Thyroid gland (tissue), 4 donors: ENCODE measurements at regions of chr16 and their contacts with region 1.

Region 1: DNA sequence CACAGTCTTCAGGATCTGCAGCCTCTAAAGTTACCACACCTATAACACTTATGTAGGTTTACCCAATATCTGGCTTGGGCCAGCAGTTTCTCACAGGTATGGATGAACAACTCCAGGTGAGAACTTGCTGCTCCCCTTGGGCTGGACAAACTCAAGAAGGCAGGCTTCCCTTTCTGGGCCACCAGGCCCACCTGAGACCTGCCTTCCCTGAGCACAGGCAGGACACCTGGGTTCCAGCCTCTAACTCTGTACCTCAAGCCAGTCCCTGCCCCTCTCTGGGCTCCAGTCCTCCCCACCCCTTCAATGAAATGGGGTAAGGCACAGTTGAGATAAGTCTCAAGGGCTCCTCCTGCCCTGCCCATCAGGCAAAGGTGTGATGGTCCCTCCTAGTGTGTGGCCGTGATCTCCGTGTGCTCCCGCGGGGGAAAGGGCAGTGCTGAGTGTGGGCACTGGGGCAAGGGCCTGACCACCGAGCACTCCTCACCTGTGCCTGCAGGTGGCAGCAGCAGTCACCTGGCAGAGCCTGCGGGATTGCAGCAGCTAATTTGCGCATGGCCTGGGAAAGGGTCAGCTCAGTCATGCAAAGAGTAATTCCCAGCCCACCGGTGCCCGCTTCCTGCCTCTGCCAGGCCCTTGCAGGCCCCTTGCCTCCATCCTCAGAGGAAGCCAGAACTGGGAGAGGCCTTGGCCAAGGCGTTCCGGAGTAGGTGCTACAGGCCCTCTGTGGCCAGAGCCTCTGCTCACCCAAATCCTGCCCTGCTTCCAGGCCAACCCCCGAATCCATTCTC is 28.2 kb upstream of the ADGRG1 start:
- DNase-seq: peak; percentile 76 to 82
- H3K4me3 ChIP-seq: no peak overlapping the region
- H3K27ac ChIP-seq: peak overlapping the region in 2 of 3 donors; percentile 4 to 26
- H3K4me1 ChIP-seq: peaks cover 10 to 18% of the 10 kb centered on the region in 2 donors
- H3K27me3 ChIP-seq: no peaks in the 10 kb centered on the region
- CTCF ChIP-seq: peak; percentile 69 to 97 (median 92)
- POLR2A ChIP-seq: no peak

Region 2: DNA sequence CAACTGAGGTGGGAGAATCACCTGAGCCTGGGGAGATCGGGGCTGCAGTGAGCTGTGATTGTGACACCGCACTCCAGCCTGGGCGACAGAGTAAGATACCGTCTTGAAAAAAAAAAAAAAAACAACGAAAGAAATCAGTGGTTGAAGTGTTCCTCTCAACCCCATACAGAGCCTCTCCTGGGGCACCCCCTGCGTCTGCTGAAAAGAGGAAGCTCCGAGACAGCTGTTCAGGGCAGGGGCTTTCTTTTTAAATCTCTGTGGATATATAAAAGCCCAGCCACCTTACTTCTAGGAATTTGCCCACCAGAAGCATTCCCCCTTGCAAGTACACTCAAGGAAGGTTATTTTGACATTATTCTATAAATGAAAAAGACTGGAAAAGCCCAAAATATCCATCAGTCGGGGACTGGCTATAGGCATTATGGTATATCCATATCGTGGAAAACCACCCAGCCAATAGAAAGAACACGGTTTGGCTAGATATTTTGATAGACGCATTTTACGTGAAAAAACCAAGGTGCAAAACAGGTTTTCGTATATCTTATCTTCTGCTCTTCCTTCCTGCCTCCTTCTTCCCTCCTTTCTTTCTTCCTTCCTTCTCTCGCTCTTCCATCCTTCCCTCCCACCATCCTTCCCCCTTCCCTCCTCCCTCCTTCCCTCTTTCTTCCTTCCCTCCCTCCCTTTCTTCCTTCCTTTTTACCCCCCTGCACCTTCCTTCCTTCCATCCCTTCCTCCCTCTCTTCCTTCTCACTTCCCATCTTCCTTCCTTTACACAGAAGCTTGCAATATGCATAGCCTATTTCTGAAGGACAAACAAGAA is 250.8 kb before region 1 on chr16:
- intact Hi-C with region 1: no loop called
- DNase-seq: no peak
- H3K4me3 ChIP-seq: no peak overlapping the region
- H3K27ac ChIP-seq: no peak overlapping the region
- H3K4me1 ChIP-seq: no peaks in the 10 kb centered on the region
- H3K27me3 ChIP-seq: no peaks in the 10 kb centered on the region
- CTCF ChIP-seq: no peak
- POLR2A ChIP-seq: no peak

Region 3: GRCh38 chr16:57648590-57649442 is 48.6 kb after region 1 on chr16:
- intact Hi-C with region 1: loop called (anchors 2 kb)
- DNase-seq: peak; percentile 71 to 79
- H3K4me3 ChIP-seq: no peak overlapping the region
- H3K27ac ChIP-seq: peak overlapping the region in 2 of 3 donors; percentile 58 to 80
- H3K4me1 ChIP-seq: peaks cover 0 to 44% of the 10 kb centered on the region in 2 donors
- H3K27me3 ChIP-seq: no peaks in the 10 kb centered on the region
- CTCF ChIP-seq: peak; percentile 96 to 100 (median 100)
- POLR2A ChIP-seq: no peak

Region 4: DNA sequence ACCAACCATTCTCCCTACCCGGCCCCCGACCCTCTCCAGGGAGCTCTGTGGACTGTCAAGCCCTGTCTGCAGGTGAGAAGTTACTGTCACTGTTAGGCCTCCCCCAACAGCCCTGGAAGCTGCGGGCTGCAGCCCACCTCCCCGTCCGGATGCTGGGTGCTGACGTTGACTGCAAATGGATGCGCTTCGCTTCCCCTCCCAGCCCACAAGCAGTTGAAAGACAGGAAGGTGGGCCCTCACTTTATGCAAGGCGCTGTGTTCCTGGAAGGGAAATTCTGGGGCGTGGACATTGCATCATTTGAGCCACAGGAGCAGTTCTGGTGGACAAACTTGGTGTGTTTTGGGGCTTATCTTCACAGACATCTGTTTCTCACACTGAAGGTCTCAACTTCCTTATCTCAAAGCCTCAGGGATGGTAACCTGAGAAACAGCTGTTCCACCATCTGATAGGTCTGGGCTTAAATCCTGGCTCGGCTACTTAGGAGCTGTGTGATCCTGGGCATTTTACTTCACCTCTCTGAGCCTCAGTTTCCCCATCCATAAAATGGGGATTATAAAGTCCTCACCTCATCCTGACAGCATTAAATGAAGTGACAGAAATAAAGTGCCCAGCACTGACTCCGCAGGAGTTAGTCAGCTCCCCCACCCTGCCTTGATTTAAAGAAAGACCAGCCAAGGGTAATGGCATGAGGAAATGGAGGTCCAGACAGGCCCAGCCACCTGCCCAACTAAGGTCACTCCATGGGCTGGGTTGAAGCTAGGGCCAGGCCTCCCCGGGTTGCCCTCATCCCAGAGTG is 89.7 kb after region 1 on chr16:
- intact Hi-C with region 1: no loop called
- DNase-seq: no peak
- H3K4me3 ChIP-seq: no peak overlapping the region
- H3K27ac ChIP-seq: no peak overlapping the region
- H3K4me1 ChIP-seq: no peaks in the 10 kb centered on the region
- H3K27me3 ChIP-seq: no peaks in the 10 kb centered on the region
- CTCF ChIP-seq: no peak
- POLR2A ChIP-seq: no peak